PC-3 (cell line): ENCODE measurements at regions of chr10 and their contacts with region 1.

Region 1: GRCh38 chr10:126749015-126749655 is 78.6 kb upstream of the C10orf90 start:
- DNase-seq: peak; percentile 93
- ATAC-seq: peak; percentile 86
- H3K4me3 ChIP-seq: no peak overlapping the region
- H3K27ac ChIP-seq: peak overlapping the region; percentile 35
- H3K4me1 ChIP-seq: peaks cover 15% of the 10 kb centered on the region
- H3K27me3 ChIP-seq: no peaks in the 10 kb centered on the region
- CTCF ChIP-seq: peak; percentile 78

Region 2: DNA sequence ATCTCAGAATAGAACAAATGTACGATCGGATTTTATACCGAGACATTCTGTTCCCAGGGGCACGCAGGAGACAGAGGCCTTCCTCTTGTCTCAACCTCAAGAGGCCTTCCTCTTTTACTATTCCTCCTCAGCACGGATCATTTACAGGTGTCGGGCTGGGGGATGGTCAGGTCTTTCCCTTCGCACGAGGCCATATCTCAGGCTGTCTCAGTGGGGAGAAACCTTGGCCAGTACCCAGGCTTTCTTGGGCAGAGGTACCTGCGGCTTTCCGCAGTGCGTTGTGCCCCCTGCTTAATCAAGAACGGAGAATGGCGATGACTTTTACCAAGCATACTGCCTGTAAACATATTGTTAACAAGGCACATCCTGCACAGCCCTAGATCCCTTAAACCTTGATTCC is 808.6 kb before region 1 on chr10:
- CTCF ChIA-PET with region 1: no interaction called
- POLR2A ChIA-PET with region 1: no interaction called
- intact Hi-C with region 1: no loop called
- DNase-seq: no peak
- ATAC-seq: no peak
- H3K4me3 ChIP-seq: no peak overlapping the region
- H3K27ac ChIP-seq: no peak overlapping the region
- H3K4me1 ChIP-seq: 0 out of 2 replicates have a peak, but pooled peaks cover 3% of the 10 kb centered on the region
- H3K27me3 ChIP-seq: no peaks in the 10 kb centered on the region
- CTCF ChIP-seq: no peak

Region 3: GRCh38 chr10:126387023-126387921 is 361.9 kb before region 1 on chr10:
- CTCF ChIA-PET with region 1: no interaction called
- POLR2A ChIA-PET with region 1: no interaction called
- intact Hi-C with region 1: no loop called
- DNase-seq: peak; percentile 73
- ATAC-seq: peak; percentile 71
- H3K4me3 ChIP-seq: peak overlapping the region; percentile 73
- H3K27ac ChIP-seq: peak overlapping the region; percentile 12; the same call in 1 of the 2 replicates
- H3K4me1 ChIP-seq: peaks cover 25% of the 10 kb centered on the region
- H3K27me3 ChIP-seq: no peaks in the 10 kb centered on the region
- CTCF ChIP-seq: peak; percentile 76

Region 4: GRCh38 chr10:126468876-126469643 is 280.1 kb before region 1 on chr10:
- CTCF ChIA-PET with region 1: no interaction called
- POLR2A ChIA-PET with region 1: no interaction called
- intact Hi-C with region 1: loop called (anchors 5 kb)
- DNase-seq: no peak
- ATAC-seq: no peak
- H3K4me3 ChIP-seq: no peak overlapping the region
- H3K27ac ChIP-seq: no peak overlapping the region
- H3K4me1 ChIP-seq: no peaks in the 10 kb centered on the region
- H3K27me3 ChIP-seq: no peaks in the 10 kb centered on the region
- CTCF ChIP-seq: no peak

Region 5: GRCh38 chr10:126569513-126570244 is 179.5 kb before region 1 on chr10:
- CTCF ChIA-PET with region 1: no interaction called
- POLR2A ChIA-PET with region 1: no interaction called
- intact Hi-C with region 1: loop called (anchors 2 kb)
- DNase-seq: peak; percentile 67
- ATAC-seq: peak; percentile 84
- H3K4me3 ChIP-seq: peak overlapping the region; percentile 44; the same call in 1 of the 2 replicates
- H3K27ac ChIP-seq: peak overlapping the region; percentile 53
- H3K4me1 ChIP-seq: peaks cover 17% of the 10 kb centered on the region
- H3K27me3 ChIP-seq: no peaks in the 10 kb centered on the region
- CTCF ChIP-seq: no peak

Region 6: GRCh38 chr10:126634915-126635314 is 114.2 kb before region 1 on chr10:
- CTCF ChIA-PET with region 1: no interaction called
- POLR2A ChIA-PET with region 1: no interaction called
- intact Hi-C with region 1: loop called (anchors 2 kb)
- DNase-seq: peak; percentile 94
- ATAC-seq: peak; percentile 89
- H3K4me3 ChIP-seq: peak overlapping the region; percentile 33; the same call in 1 of the 2 replicates
- H3K27ac ChIP-seq: peak overlapping the region; percentile 99
- H3K4me1 ChIP-seq: peaks cover 23% of the 10 kb centered on the region
- H3K27me3 ChIP-seq: no peaks in the 10 kb centered on the region
- CTCF ChIP-seq: no peak